ENCODE measurements at regions of chr6 and their contacts with region 1.

Region 1: GRCh38 chr6:3813150-3813780 is 35.9 kb upstream of the FAM50B start:
- DNase-seq: peak; percentile 87

Region 2: DNA sequence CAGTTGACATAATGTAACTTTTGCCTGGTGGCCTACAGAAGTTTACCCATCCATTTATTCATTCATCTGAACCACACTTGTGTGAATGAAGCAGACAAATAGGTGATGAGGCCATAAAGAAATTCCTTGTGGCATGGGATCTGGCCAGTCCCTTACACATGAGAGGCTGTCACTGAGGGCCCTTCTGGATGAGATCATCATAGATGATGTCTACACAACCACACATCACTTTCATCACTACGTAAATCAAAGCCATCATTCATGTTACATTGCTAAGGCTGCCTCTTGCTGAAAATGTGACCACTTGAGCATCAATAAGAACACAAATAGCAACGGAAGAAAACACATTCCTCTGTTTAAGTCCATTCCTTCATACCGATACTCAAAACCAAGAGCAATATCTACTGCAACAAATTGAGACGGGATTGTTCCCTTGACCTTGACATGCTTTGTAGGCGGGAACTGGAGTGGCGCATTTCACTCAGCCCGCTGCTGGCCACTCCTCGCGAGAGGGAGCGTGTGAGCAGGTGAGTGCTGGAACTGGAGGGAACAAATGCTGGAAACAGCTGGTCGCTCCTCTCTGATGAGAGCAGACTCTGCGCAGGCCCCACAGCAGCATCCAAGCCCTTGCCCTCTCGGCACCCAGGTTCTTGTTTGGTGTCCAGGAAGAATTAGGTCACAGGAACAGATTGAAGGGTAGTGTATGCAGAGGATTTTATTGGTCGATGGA is 85.2 kb after region 1 on chr6:
- intact Hi-C with region 1: loop called in 1 of 2 experiments (anchors 1 kb)
- DNase-seq: no peak

Measured in posterior vena cava (tissue), 2 donors.